Upper lobe of right lung (tissue), 1 donor: ENCODE measurements at regions of chr12 and their contacts with region 1.

Region 1: DNA sequence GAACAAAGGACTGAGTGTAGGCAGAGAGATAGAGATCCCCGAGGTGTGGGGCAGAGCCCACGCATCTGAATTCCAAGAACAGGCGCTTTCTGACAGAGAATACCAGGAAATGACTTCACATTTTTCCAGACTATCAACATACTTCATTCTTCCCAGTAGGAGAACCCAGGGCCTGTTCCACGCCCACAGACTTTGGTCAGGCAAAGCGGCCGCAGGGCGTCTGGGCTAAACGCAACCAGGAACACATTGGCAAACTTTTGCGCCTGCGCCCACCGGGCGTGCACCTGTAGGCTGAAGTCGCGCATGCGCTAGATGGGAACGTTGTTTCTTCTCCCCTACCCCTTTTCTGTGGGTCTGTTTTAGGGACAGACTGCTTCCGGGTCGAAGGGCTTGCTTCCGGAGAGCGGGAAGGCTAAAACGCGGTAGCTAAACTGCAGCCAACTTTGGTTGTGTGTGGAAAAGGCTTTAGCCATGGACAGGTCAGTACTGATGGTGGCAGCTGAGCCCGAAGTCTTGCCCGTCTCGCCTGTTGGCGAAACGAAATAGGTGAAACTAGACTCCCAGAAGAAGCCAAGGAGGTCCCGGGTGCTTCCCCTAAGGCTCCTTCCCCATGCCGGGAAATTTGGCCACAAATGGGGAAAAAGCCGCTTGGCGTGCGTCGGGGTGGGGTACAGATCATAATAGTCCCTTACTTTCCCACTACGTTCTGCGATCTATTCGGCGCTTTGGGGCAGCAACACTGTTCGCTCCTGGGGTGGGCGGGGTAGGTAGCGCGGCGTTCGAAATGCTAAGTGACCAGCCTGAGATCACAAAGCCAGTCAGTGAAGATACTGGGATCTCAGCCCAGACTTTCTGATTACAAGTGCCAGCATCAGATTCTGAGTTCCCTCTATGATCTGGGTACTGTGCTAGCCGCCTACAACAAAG is at the start of gene NUP107:
- DNase-seq: peak; percentile 99
- ATAC-seq: peak; percentile 98
- H3K4me3 ChIP-seq: peak within 1 kb of the TSS; percentile 82
- H3K27ac ChIP-seq: peak within 1 kb of the TSS; percentile 84
- H3K4me1 ChIP-seq: peaks cover 15% of the 10 kb centered on the region
- H3K27me3 ChIP-seq: no peaks in the 10 kb centered on the region
- CTCF ChIP-seq: no peak
- total RNA-seq, gene NUP107: 22.7 TPM

Region 2: DNA sequence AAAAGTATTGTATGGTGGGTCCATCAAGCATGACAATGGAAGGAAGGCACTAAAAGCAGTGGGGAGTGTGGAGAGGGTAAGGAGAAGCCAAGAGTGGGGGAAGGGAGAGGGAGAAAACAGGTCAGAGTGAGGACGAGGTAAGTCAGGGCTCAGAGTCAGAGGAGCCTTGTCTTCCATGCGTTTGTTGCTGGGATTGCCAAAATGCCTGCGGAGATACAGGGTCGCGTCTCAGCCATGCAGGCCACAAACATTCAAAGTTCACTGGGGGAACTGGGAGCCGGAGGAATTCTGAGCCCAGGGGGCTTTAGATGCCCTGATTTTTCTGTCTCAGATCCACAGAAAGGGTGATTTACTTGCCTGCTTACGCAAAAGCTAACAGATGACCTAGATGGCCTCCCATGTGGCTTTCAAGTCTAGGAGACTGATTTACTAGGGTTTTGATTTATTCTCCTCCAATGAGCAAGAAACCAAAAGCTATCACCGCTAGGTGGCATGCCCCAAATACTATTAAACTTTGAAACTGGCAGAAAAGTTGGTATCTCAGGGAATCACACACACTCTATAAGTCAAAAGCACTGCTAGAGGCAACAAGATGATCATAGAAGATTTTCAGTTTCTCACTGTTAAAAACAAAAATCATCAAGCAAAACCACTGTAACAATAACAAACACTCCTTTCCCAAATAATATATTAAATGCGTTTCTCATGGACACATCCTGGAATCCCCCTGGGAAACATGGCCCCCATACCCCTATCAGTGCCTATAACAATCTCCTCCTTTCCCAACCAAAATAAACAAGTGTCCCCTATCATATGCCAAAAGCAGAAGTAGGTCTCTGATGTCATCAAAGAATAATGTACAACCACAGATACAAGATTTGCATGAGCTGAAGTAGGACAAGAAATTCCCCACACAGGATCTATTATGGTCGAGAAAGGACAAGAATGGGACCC is 328.0 kb before region 1 on chr12:
- intact Hi-C with region 1: loop called (anchors 10 kb)
- DNase-seq: no peak
- ATAC-seq: peak; percentile 87
- H3K4me3 ChIP-seq: no peak overlapping the region
- H3K27ac ChIP-seq: peak overlapping the region; percentile 1
- H3K4me1 ChIP-seq: peaks cover 16% of the 10 kb centered on the region
- H3K27me3 ChIP-seq: no peaks in the 10 kb centered on the region
- CTCF ChIP-seq: peak; percentile 65

Region 3: DNA sequence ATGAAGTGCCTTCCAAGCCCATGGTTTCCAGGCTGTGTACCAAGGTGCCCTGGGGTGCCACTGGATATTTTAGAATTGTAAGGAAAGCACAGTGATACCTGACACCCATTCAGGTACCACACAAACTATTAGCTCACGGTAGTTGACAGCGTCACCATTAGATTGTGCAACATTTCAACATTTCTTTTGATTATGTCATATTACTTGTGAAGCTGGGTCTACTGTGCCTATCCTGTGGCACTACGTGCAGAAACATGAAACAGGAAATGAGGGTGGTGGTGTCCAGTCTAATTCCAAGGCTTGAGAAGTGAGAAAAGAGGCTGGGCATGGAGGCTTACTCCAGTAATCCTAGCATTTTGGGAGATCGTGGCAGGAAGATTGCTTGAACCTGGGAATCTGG is 321.7 kb after region 1 on chr12:
- intact Hi-C with region 1: no loop called
- DNase-seq: no peak
- ATAC-seq: peak; percentile 78
- H3K4me3 ChIP-seq: no peak overlapping the region
- H3K27ac ChIP-seq: no peak overlapping the region
- H3K4me1 ChIP-seq: peaks cover 14% of the 10 kb centered on the region
- H3K27me3 ChIP-seq: no peaks in the 10 kb centered on the region
- CTCF ChIP-seq: no peak